Heart left ventricle (tissue), 16 donors: ENCODE measurements at regions of chr16 and their contacts with region 1.

Region 1: GRCh38 chr16:79677799-79678577 is 77.5 kb upstream of the MAF start:
- DNase-seq: no peak
- ATAC-seq: no peak
- H3K4me3 ChIP-seq: no peak overlapping the region
- H3K27ac ChIP-seq: no peak overlapping the region
- H3K4me1 ChIP-seq: no peaks in the 10 kb centered on the region
- H3K27me3 ChIP-seq: no peaks in the 10 kb centered on the region
- CTCF ChIP-seq: no peak
- POLR2A ChIP-seq: no peak

Region 2: GRCh38 chr16:79580453-79581191 is 97.4 kb before region 1 on chr16:
- intact Hi-C with region 1: no loop called
- DNase-seq: no peak
- ATAC-seq: no peak
- H3K4me3 ChIP-seq: no peak overlapping the region
- H3K27ac ChIP-seq: no peak overlapping the region
- H3K4me1 ChIP-seq: no peaks in the 10 kb centered on the region
- H3K27me3 ChIP-seq: peaks cover 0 to 37% (median 0%) of the 10 kb centered on the region in 9 donors
- CTCF ChIP-seq: no peak
- POLR2A ChIP-seq: no peak

Region 3: GRCh38 chr16:80015566-80015965 is 337.6 kb after region 1 on chr16:
- intact Hi-C with region 1: loop called in 1 of 10 experiments (anchors 5 kb)
- DNase-seq: no peak
- ATAC-seq: no peak
- H3K4me3 ChIP-seq: no peak overlapping the region
- H3K27ac ChIP-seq: no peak overlapping the region
- H3K4me1 ChIP-seq: no peaks in the 10 kb centered on the region
- H3K27me3 ChIP-seq: no peaks in the 10 kb centered on the region
- CTCF ChIP-seq: no peak
- POLR2A ChIP-seq: no peak